Left colon (tissue), 2 donors: ENCODE measurements at regions of chr10 and their contacts with region 1.

Region 1: DNA sequence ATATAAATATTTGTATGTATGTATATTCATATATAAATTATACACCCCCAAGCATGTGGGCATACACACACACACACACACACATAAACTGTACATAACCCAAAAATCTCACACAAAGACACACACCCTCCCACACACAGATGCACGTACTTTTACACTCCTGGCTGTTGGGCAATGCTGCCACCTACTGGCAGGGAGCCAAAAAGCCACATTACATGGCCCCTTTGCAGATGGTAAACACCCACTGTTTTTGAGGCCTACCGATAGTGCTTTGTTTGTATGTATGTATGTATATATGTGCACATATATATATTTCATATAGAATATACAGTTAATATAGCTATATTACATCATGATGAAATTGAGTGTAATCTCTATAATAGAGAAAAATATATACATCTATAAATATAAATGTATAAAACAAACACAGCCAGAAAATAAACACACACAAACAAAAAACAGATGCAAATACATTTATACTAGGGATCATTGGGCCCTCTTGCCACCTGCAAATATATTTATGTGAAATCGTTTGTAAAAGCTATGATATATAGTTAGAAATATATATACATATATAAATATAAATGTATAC is 120.1 kb upstream of the ACBD5 start:
- DNase-seq: peak; percentile 59 to 78
- ATAC-seq: peak; percentile 90

Region 2: GRCh38 chr10:27223964-27224363 is 136.7 kb before region 1 on chr10:
- intact Hi-C with region 1: loop called in 1 of 2 experiments (anchors 10 kb)
- DNase-seq: peak in 1 of 2 donors; percentile 53
- ATAC-seq: peak; percentile 75

Region 3: DNA sequence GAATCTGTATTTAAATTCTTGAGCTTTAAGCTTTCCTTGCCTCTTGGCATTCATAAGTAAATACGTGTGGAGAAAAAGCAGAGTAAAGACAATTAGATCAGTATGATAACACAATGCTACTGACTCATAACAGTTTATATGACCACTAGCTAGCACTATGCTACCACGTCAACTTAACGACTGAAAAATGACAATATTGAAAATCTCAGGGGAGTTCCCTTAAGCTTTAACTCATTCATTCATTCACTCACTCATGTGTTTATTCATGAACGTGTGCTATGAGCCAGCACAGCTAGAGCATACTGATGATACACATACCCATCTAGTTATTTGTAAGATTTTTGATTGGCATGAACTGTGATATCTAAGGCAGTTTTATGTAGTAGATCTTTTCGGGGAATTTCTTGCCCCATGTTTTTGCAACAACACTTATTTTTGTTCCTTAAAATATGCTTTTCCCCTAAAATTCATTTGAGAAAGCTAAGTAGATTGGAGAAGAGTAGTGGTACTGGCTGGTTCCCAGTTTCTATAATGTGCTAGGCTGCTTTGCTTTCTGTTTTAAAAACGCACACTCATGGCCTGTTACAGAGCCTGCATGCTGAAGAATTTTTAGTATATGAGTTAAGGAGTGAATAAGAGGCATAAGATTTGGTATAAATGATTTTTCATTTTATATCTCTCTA is 62.7 kb before region 1 on chr10:
- intact Hi-C with region 1: no loop called
- DNase-seq: no peak
- ATAC-seq: no peak

Region 4: GRCh38 chr10:27440478-27440877 is 79.8 kb after region 1 on chr10:
- intact Hi-C with region 1: no loop called
- DNase-seq: no peak
- ATAC-seq: no peak